HepG2 (cell line): ENCODE measurements at regions of chr3 and their contacts with region 1.

Region 1: DNA sequence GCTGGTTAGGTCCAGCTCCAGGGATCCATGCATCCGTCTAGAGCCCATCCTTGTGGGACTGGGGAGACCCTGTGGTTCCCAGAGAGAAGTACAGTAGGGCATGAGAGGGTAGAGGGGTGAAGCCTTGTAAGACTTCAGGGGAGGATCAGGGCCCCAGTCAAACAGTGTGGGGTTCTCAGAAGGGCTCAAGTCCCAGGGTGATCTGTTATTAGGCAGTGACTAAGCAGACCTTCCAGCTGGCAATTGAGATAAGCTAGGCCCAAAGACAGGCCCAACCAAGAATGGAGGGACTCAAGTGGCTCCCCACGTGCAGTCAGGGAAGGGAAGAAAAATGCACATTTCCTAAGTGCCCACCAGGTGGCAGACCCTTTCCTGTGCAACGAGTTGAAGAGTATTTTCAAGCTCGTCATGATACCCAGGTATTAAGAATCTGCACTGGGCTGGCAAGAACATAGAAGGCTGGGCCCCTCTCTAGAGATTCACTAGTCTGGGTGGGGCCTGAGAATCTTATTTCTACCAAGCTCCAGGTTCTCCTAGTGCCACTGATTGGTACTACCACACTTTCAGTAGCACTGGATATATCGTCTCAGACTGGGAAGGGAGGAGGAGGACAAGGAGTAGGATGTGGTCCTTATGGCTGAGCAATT is 240.8 kb downstream of the NR1D2 start:
- DNase-seq: peak; percentile 26
- ATAC-seq: peak; percentile 88
- H3K4me3 ChIP-seq: no peak overlapping the region
- H3K27ac ChIP-seq: no peak overlapping the region
- H3K4me1 ChIP-seq: no peaks in the 10 kb centered on the region
- H3K27me3 ChIP-seq: no peaks in the 10 kb centered on the region
- CTCF ChIP-seq: peak; percentile 73
- EP300 ChIP-seq: no peak
- POLR2A ChIP-seq: no peak
- RAD21 ChIP-seq: 0 out of 2 replicates have a peak, but pooled peaks have one; percentile 39

Region 2: DNA sequence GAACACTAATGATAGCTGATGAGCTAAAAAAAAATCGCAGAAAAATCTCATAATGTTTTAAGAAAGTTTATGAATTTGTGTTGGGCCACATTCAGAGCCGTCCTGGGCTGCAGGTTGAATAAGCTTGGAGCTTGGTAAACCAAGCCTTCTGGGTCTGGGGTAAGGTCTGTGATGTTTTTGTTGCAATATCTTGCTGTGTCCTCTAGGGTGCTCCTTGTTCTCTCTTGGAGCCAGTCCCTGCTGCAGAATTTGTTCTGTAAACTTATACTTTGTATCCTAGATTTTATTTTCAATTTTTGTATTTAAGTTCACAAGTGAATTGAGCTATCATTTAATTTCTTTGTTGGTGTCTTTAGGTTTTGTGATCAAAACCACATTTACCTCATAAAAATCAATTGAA is 97.1 kb before region 1 on chr3:
- CTCF ChIA-PET with region 1: no interaction called
- POLR2A ChIA-PET with region 1: no interaction called
- in situ Hi-C with region 1: no loop called
- intact Hi-C with region 1: loop called (anchors 5 kb)
- DNase-seq: peak; percentile 20
- ATAC-seq: peak; percentile 94
- H3K4me3 ChIP-seq: no peak overlapping the region
- H3K27ac ChIP-seq: no peak overlapping the region
- H3K4me1 ChIP-seq: peaks cover 22% of the 10 kb centered on the region
- H3K27me3 ChIP-seq: no peaks in the 10 kb centered on the region; a peak in 1 of 5 replicates
- CTCF ChIP-seq: peak; percentile 57
- EP300 ChIP-seq: no peak
- POLR2A ChIP-seq: no peak
- RAD21 ChIP-seq: 0 out of 2 replicates have a peak, but pooled peaks have one; percentile 18

Region 3: GRCh38 chr3:24359645-24360462 is 174.0 kb after region 1 on chr3:
- CTCF ChIA-PET with region 1: no interaction called
- POLR2A ChIA-PET with region 1: no interaction called
- in situ Hi-C with region 1: no loop called
- intact Hi-C with region 1: no loop called
- DNase-seq: no peak
- ATAC-seq: peak; percentile 76
- H3K4me3 ChIP-seq: no peak overlapping the region
- H3K27ac ChIP-seq: no peak overlapping the region
- H3K4me1 ChIP-seq: peaks cover 49% of the 10 kb centered on the region
- H3K27me3 ChIP-seq: no peaks in the 10 kb centered on the region
- CTCF ChIP-seq: peak; percentile 49; the same call in 1 of the 2 replicates
- EP300 ChIP-seq: no peak
- POLR2A ChIP-seq: no peak
- RAD21 ChIP-seq: peak; percentile 52; the same call in 1 of the 2 replicates